Activated T-helper 2 cell treated with anti-CD3 and anti-CD28 coated beads, Interferon-gamma antibody, Interleukin-2, Interleukin-4, amounts not matched to agents 10 μg/mL and 5 μg/mL and 100 μg/mL, durations not matched to agents 14 hours and 24 hours and 36 hours (primary cell): ENCODE measurements at regions of chr11 and their contacts with region 1.

Region 1: DNA sequence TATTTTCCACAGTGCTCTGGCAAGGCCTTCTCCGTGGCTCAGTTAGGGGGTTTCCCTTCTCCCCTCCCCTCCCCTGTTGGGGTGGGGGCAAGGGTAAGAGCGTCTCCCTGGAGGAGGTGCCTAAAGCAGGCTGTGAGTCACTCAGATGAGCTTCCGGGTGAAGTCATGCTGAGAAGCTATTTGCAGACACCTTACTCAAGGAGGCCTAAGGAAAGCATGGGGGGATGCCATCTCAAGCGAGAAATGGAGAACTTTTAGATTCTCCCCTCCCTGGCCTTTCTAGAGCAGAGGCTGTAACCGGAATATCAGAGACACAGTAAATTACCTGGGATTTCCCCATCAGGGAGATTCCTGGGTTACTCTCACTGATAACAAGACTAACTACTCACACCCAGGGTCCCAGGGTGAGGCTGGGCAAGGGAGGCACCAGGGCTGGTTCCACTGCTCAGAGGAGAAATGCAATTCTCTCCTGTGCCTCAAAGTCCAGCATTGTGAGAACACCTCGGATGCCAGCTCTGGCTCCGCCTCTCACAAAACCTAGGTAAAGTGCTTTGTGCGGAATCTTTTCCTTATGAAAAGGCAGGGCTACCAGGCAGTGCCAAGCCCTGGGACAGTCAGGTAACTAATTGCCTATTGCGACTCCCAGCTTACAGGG is 123.6 kb downstream of the ABTB2 start:
- DNase-seq: peak; percentile 77
- H3K4me3 Mint-ChIP-seq: peak overlapping the region; percentile 20
- H3K27ac Mint-ChIP-seq: peak overlapping the region; percentile 88
- H3K4me1 Mint-ChIP-seq: peaks cover 75% of the 10 kb centered on the region
- H3K27me3 Mint-ChIP-seq: no peaks in the 10 kb centered on the region

Region 2: DNA sequence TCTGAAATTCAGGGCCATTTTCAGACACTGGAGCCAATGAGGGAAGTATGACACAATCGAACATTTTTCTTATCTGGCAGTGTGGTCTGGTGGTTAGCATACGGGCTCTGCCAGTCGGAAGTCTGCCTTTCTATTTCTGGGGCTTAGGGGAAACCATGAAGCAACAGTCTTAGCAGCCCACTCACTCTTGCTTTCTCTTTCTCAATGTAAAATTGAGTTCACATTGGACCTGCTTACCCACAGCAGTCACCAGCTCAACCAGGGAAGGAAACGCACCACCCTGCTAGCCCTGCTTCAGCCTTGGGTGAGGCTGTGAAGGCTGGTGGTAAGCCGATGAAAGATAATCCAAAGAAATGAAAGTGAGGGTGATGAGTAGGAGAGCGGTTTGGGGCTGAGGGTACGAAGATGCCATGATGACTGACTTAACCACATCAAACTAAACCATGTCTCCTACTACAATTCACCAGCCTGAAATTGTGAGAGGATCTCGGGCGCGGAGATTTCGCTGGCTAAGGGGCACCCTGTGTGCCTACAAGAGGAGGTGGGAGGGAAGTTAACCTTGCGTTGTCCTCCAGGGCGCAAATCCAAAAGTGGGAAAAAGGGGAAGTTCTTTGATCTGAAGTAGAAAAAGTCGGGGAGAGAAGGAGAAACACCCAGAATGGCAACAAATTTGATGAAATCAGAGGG is 340.4 kb before region 1 on chr11:
- intact Hi-C with region 1: loop called (anchors 10 kb)
- DNase-seq: peak; percentile 59
- H3K4me3 Mint-ChIP-seq: peak overlapping the region; percentile 16
- H3K27ac Mint-ChIP-seq: peak overlapping the region; percentile 46
- H3K4me1 Mint-ChIP-seq: peaks cover 19% of the 10 kb centered on the region
- H3K27me3 Mint-ChIP-seq: peaks cover 76% of the 10 kb centered on the region

Region 3: GRCh38 chr11:34174412-34175041 is 59.7 kb before region 1 on chr11:
- intact Hi-C with region 1: loop called (anchors 1 kb)
- DNase-seq: peak; percentile 72
- H3K4me3 Mint-ChIP-seq: peak overlapping the region; percentile 62
- H3K27ac Mint-ChIP-seq: peak overlapping the region; percentile 49
- H3K4me1 Mint-ChIP-seq: peaks cover 46% of the 10 kb centered on the region
- H3K27me3 Mint-ChIP-seq: no peaks in the 10 kb centered on the region

Region 4: GRCh38 chr11:34208266-34209135 is 25.7 kb before region 1 on chr11:
- intact Hi-C with region 1: loop called (anchors 1 kb)
- DNase-seq: no peak
- H3K4me3 Mint-ChIP-seq: no peak overlapping the region
- H3K27ac Mint-ChIP-seq: peak overlapping the region; percentile 50
- H3K4me1 Mint-ChIP-seq: peaks cover 45% of the 10 kb centered on the region
- H3K27me3 Mint-ChIP-seq: no peaks in the 10 kb centered on the region

Region 5: DNA sequence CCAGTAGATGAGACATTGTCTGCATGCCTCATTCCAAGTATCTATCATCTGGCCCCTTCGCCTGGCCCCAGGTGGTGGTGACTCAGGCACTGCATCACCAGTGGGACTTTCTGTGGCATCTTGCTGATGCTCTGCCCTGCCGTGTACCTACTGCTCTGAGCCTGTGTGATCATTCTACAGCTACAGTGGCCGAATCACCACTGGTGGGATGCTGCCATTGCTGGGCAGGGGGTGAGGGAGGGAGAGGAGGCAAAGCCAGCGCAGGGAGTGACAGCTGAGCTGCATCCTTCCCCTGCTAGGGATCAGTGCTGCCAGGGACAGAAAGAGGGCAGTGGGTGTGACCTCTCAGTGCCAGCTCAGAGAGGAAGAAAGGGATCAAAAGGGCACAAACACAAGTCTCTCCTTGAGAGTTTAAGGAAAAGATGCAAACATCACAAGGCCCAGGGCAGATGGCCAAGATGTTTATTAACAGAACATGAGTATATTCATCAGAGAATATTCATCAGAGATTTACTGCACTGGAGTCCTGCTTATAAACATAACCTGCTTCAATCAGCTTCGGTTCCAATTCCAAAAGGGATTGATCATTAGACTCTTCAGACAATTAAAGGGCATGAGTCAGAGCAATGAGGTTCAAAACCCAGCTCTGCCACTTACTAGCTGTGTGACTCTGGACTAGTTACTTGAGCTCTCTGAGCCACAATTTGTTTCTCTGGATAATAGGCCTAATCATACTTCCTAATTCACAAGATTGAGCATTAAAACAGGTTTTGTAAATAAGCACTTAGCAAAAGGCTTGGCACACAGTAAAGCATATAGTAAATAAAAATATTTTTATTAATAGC is 19.0 kb before region 1 on chr11:
- intact Hi-C with region 1: loop called (anchors 1 kb)
- DNase-seq: no peak
- H3K4me3 Mint-ChIP-seq: peak overlapping the region; percentile 6
- H3K27ac Mint-ChIP-seq: peak overlapping the region; percentile 84
- H3K4me1 Mint-ChIP-seq: peaks cover 27% of the 10 kb centered on the region
- H3K27me3 Mint-ChIP-seq: no peaks in the 10 kb centered on the region

Region 6: GRCh38 chr11:34250732-34251639 is 16.8 kb after region 1 on chr11:
- intact Hi-C with region 1: loop called (anchors 2 kb)
- DNase-seq: peak; percentile 61
- H3K4me3 Mint-ChIP-seq: peak overlapping the region; percentile 34
- H3K27ac Mint-ChIP-seq: peak overlapping the region; percentile 47
- H3K4me1 Mint-ChIP-seq: peaks cover 68% of the 10 kb centered on the region
- H3K27me3 Mint-ChIP-seq: no peaks in the 10 kb centered on the region